ENCODE measurements at regions of chr1 and their contacts with region 1.

Region 1: GRCh38 chr1:32291708-32292492 is at the start of gene HDAC1:
- DNase-seq: peak; percentile 95 to 97 (median 96)
- H3K4me3 ChIP-seq: peak within 1 kb of the TSS; percentile 79 to 96 (median 91)
- H3K4me3 Mint-ChIP-seq: peak within 1 kb of the TSS; percentile 100
- H3K27ac ChIP-seq: peak within 1 kb of the TSS; percentile 52 to 88
- H3K27ac Mint-ChIP-seq: peak within 1 kb of the TSS; percentile 91 to 97 (median 96)
- H3K4me1 ChIP-seq: peaks cover 18 to 21% of the 10 kb centered on the region in 2 donors
- H3K4me1 Mint-ChIP-seq: peaks cover 40% of the 10 kb centered on the region
- H3K27me3 ChIP-seq: no peaks in the 10 kb centered on the region
- H3K27me3 Mint-ChIP-seq: peaks cover 0 to 5% (median 4%) of the 10 kb centered on the region in 3 donors
- CTCF ChIP-seq: no peak
- polyA plus RNA-seq, gene HDAC1: 73.8 to 95.0 (median 88.7) TPM

Region 2: GRCh38 chr1:32179443-32180185 is 112.3 kb before region 1 on chr1 and contains the start of gene TXLNA:
- intact Hi-C with region 1: loop called in 1 of 2 experiments (anchors 10 kb)
- DNase-seq: peak; percentile 84 to 86 (median 84)
- H3K4me3 ChIP-seq: peak within 1 kb of the TSS; percentile 57 to 83 (median 77)
- H3K4me3 Mint-ChIP-seq: peak within 1 kb of the TSS; percentile 90 to 95
- H3K27ac ChIP-seq: peak within 1 kb of the TSS; percentile 83 to 87
- H3K27ac Mint-ChIP-seq: peak within 1 kb of the TSS; percentile 95 to 99 (median 97)
- H3K4me1 ChIP-seq: peaks cover 35 to 41% of the 10 kb centered on the region in 2 donors
- H3K4me1 Mint-ChIP-seq: peaks cover 45% of the 10 kb centered on the region
- H3K27me3 ChIP-seq: no peaks in the 10 kb centered on the region
- H3K27me3 Mint-ChIP-seq: peaks cover 0 to 2% (median 0%) of the 10 kb centered on the region in 3 donors
- CTCF ChIP-seq: no peak
- polyA plus RNA-seq, gene TXLNA: 12.3 to 15.3 (median 14.4) TPM